Transverse colon (tissue), 4 donors: ENCODE measurements at regions of chr5 and their contacts with region 1.

Region 1: GRCh38 chr5:16489322-16489791 is 23.8 kb upstream of the ZNF622 start:
- DNase-seq: no peak
- H3K4me3 ChIP-seq: no peak overlapping the region
- H3K27ac ChIP-seq: no peak overlapping the region
- H3K4me1 ChIP-seq: peaks cover 5 to 80% (median 29%) of the 10 kb centered on the region in 4 donors
- H3K27me3 ChIP-seq: no peaks in the 10 kb centered on the region
- CTCF ChIP-seq: peak; percentile 50 to 73 (median 57)
- EP300 ChIP-seq: no peak
- POLR2A ChIP-seq: no peak

Region 2: GRCh38 chr5:14743601-14744295 is 1745.6 kb before region 1 on chr5:
- in situ Hi-C with region 1: no loop called
- intact Hi-C with region 1: no loop called
- DNase-seq: no peak
- H3K4me3 ChIP-seq: no peak overlapping the region
- H3K27ac ChIP-seq: no peak overlapping the region
- H3K4me1 ChIP-seq: no peaks in the 10 kb centered on the region
- H3K27me3 ChIP-seq: no peaks in the 10 kb centered on the region
- CTCF ChIP-seq: no peak
- EP300 ChIP-seq: no peak
- POLR2A ChIP-seq: no peak

Region 3: DNA sequence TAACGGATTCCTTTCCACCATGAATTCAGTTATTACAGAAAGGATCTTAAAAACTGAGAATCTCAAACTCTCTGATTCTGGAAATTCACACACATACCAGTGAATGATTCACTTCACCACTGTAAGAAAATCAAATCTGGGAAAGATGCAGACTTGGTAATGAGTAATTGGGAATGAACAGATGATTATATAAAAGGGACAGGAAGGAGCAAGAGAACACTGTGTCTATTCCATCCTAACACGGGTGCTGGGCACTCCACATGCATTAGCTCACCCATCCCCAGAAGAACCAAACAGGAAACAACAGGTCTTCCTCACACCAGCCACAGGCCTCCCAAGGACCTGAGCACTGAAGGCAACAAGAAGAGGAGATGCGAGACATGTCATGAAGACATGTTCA is 51.1 kb after region 1 on chr5:
- in situ Hi-C with region 1: loop called in 1 of 4 experiments (anchors 10 kb)
- intact Hi-C with region 1: no loop called
- DNase-seq: no peak
- H3K4me3 ChIP-seq: no peak overlapping the region
- H3K27ac ChIP-seq: peak overlapping the region; percentile 67 to 80 (median 71)
- H3K4me1 ChIP-seq: peaks cover 0 to 30% (median 19%) of the 10 kb centered on the region in 4 donors
- H3K27me3 ChIP-seq: no peaks in the 10 kb centered on the region
- CTCF ChIP-seq: no peak
- EP300 ChIP-seq: no peak
- POLR2A ChIP-seq: no peak

Region 4: GRCh38 chr5:16666883-16667398 is 177.6 kb after region 1 on chr5:
- in situ Hi-C with region 1: loop called in 2 of 4 experiments (anchors 10 to 25 kb)
- intact Hi-C with region 1: no loop called
- DNase-seq: peak; percentile 63
- H3K4me3 ChIP-seq: no peak overlapping the region
- H3K27ac ChIP-seq: peak overlapping the region in 2 of 4 donors; percentile 39 to 41
- H3K4me1 ChIP-seq: peaks cover 0 to 15% (median 6%) of the 10 kb centered on the region in 4 donors
- H3K27me3 ChIP-seq: no peaks in the 10 kb centered on the region
- CTCF ChIP-seq: peak; percentile 42 to 69 (median 50)
- EP300 ChIP-seq: no peak
- POLR2A ChIP-seq: no peak